HCT116 (cell line): ENCODE measurements at regions of chr17 and their contacts with region 1.

Region 1: GRCh38 chr17:41548844-41549595 is 20.9 kb upstream of the KRT19 start:
- DNase-seq: peak; percentile 83
- ATAC-seq: peak; percentile 79
- H3K4me3 ChIP-seq: peak overlapping the region; percentile 6 to 46; a peak in 3 of 4 replicates
- H3K27ac ChIP-seq: peak overlapping the region; percentile 91
- H3K4me1 ChIP-seq: peaks cover 39 to 79% of the 10 kb centered on the region in 2 experiments
- H3K27me3 ChIP-seq: no peaks in the 10 kb centered on the region
- CTCF ChIP-seq: peak; percentile 86 to 98 (median 88)
- POLR2A ChIP-seq: no peak
- RAD21 ChIP-seq: peak; percentile 95

Region 2: GRCh38 chr17:40854159-40854814 is 694.7 kb before region 1 on chr17:
- CTCF ChIA-PET with region 1: interaction called, 31 read pairs
- POLR2A ChIA-PET with region 1: interaction called, 8 read pairs
- RAD21 ChIA-PET with region 1: interaction called, 6 to 12 read pairs
- intact Hi-C with region 1: loop called (anchors 1 kb)
- DNase-seq: peak; percentile 71
- ATAC-seq: peak; percentile 71
- H3K4me3 ChIP-seq: no peak overlapping the region
- H3K27ac ChIP-seq: peak overlapping the region; percentile 25; the same call in 1 of the 2 replicates
- H3K4me1 ChIP-seq: peaks cover 11 to 50% of the 10 kb centered on the region in 2 experiments
- H3K27me3 ChIP-seq: no peaks in the 10 kb centered on the region
- CTCF ChIP-seq: no peak
- POLR2A ChIP-seq: no peak
- RAD21 ChIP-seq: 0 out of 2 replicates have a peak, but pooled peaks have one; percentile 17

Region 3: GRCh38 chr17:41403798-41404671 is 145.0 kb before region 1 on chr17:
- CTCF ChIA-PET with region 1: interaction called, 7 read pairs
- POLR2A ChIA-PET with region 1: interaction called, 3 read pairs
- RAD21 ChIA-PET with region 1: interaction called, 5 to 12 read pairs
- intact Hi-C with region 1: loop called (anchors 2 kb)
- DNase-seq: peak; percentile 99
- ATAC-seq: peak; percentile 84
- H3K4me3 ChIP-seq: no peak overlapping the region
- H3K27ac ChIP-seq: peak overlapping the region; percentile 78
- H3K4me1 ChIP-seq: peaks cover 43 to 73% of the 10 kb centered on the region in 2 experiments
- H3K27me3 ChIP-seq: no peaks in the 10 kb centered on the region
- CTCF ChIP-seq: no peak
- POLR2A ChIP-seq: no peak
- RAD21 ChIP-seq: peak; percentile 56

Region 4: GRCh38 chr17:41510251-41511065 is 38.6 kb before region 1 on chr17:
- CTCF ChIA-PET with region 1: interaction called, 10 read pairs
- POLR2A ChIA-PET with region 1: no interaction called
- RAD21 ChIA-PET with region 1: interaction called in 1 of 2 experiments, 3 read pairs
- intact Hi-C with region 1: no loop called
- DNase-seq: no peak
- ATAC-seq: 0 out of 2 replicates have a peak, but pooled peaks have one; percentile 25
- H3K4me3 ChIP-seq: no peak overlapping the region
- H3K27ac ChIP-seq: no peak overlapping the region
- H3K4me1 ChIP-seq: peaks cover 13 to 62% of the 10 kb centered on the region in 2 experiments
- H3K27me3 ChIP-seq: no peaks in the 10 kb centered on the region
- CTCF ChIP-seq: no peak
- POLR2A ChIP-seq: no peak
- RAD21 ChIP-seq: no peak

Region 5: DNA sequence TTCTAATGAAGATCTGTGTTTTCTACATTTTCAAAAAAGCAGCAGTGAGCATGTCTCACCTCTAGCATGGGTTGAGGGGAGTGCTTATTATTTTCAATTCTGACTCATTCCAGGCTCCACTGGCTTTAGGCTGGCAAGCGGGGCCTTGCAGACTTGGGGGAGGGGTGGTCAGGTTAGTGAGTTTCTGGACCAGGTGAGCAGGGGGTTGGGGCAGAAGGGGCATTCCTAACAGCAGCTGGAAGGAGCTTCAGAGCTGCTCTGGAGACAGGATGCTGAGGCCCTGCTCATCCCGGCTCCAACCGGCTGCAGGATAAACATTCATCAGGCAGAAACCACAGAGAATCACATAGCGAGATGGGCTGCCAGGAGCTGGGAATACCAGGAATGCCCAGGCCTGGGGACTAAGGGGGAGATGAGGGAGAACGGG is 10.4 kb before region 1 on chr17:
- CTCF ChIA-PET with region 1: interaction called, 39 read pairs
- POLR2A ChIA-PET with region 1: interaction called, 6 read pairs
- RAD21 ChIA-PET with region 1: interaction called in 1 of 2 experiments, 3 read pairs
- intact Hi-C with region 1: no loop called
- DNase-seq: no peak
- ATAC-seq: no peak
- H3K4me3 ChIP-seq: no peak overlapping the region
- H3K27ac ChIP-seq: no peak overlapping the region
- H3K4me1 ChIP-seq: peaks cover 22 to 64% of the 10 kb centered on the region in 2 experiments
- H3K27me3 ChIP-seq: no peaks in the 10 kb centered on the region
- CTCF ChIP-seq: no peak
- POLR2A ChIP-seq: no peak
- RAD21 ChIP-seq: no peak

Region 6: DNA sequence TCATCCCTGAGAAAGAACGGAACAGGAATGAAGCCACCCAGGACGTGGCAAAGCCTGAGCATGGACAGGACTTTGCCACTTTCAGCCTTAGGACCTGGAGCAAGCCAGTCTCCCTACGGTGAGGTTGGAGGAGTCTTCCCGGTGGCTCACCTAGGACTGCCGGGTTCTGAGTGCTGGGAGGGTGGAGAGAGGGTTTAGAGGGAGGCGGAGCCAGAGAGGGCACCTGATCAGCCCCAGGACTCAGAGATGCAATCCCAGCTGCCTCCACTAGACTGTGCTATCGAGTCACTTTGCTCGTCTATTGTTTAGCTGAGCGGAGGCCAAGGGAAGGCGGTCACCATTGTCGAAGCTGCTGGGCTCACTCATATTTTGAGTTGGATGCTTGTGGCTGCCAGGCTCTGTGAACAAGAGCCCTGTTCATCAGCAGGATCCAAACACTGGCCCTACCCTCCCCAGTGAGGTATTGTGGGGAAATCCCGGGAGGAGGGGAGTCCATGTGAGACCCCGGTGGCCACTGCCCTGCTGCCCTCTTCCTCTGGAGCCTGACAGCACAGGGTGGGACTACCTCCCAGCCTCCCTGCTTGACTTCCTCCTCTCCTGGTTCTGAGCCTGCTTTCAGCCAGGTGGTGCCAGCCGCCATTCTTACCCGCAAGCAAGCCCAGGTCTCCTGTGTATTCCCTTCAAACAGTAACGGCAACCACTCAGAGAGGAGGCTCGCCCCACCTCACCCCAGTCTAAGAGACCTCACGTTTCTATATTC is 30.6 kb after region 1 on chr17:
- CTCF ChIA-PET with region 1: interaction called, 29 read pairs
- POLR2A ChIA-PET with region 1: no interaction called
- RAD21 ChIA-PET with region 1: interaction called, 4 to 5 read pairs
- intact Hi-C with region 1: no loop called
- DNase-seq: peak; percentile 82
- ATAC-seq: peak; percentile 95
- H3K4me3 ChIP-seq: peak overlapping the region; percentile 17 to 47
- H3K27ac ChIP-seq: peak overlapping the region; percentile 37
- H3K4me1 ChIP-seq: peaks cover 22 to 49% of the 10 kb centered on the region in 2 experiments
- H3K27me3 ChIP-seq: no peaks in the 10 kb centered on the region
- CTCF ChIP-seq: peak; percentile 84 to 94 (median 86)
- POLR2A ChIP-seq: peak; percentile 48
- RAD21 ChIP-seq: peak; percentile 89

Region 7: DNA sequence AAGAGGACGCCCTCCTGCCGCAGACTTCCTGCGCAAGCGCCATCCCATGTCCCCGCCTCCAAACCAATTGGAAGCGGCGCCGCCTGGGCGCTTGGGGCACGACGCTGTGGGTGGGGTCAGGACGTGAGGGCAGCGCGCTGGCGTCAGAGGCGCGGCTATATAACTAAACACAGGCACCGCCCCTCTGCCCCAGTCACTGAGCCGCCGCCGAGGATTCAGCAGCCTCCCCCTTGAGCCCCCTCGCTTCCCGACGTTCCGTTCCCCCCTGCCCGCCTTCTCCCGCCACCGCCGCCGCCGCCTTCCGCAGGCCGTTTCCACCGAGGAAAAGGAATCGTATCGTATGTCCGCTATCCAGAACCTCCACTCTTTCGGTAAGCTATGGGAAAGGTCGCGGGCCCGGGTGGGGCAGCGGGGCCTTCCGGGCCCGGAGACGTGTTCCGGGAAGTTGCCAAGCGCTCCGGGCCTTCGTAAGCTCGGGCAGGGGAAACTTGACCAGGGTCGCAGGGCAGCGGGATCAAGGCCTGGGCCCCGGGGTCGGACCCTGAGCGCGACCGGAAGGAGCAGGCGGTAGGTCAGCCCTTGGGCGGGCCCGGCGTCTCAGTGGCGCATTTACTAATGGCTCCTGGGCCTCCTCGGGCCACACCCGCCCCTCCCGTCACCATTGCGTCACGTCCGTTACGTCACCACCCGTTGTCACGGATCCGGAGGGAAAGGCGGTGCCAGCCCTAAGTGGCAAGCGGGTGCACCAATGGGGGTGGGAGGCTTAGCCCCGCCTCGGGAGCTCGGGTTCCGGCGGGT is 139.9 kb after region 1 on chr17 and contains the start of gene EIF1:
- CTCF ChIA-PET with region 1: interaction called, 3 read pairs
- POLR2A ChIA-PET with region 1: interaction called, 11 read pairs
- RAD21 ChIA-PET with region 1: no interaction called
- intact Hi-C with region 1: no loop called
- DNase-seq: peak; percentile 99
- ATAC-seq: peak; percentile 76
- H3K4me3 ChIP-seq: peak within 1 kb of the TSS; percentile 81 to 93
- H3K27ac ChIP-seq: peak within 1 kb of the TSS; percentile 97
- H3K4me1 ChIP-seq: peaks cover 10 to 17% of the 10 kb centered on the region in 2 experiments
- H3K27me3 ChIP-seq: no peaks in the 10 kb centered on the region
- CTCF ChIP-seq: no peak
- POLR2A ChIP-seq: peak; percentile 93
- RAD21 ChIP-seq: no peak
- total RNA-seq, gene EIF1: 1,082 TPM